Sigmoid colon (tissue), 7 donors: ENCODE measurements at regions of chr6 and their contacts with region 1.

Region 1: GRCh38 chr6:106325336-106326178 is at the start of gene ATG5:
- DNase-seq: peak; percentile 99
- H3K4me3 ChIP-seq: peak within 1 kb of the TSS; percentile 64 to 88 (median 80)
- H3K27ac ChIP-seq: peak within 1 kb of the TSS; percentile 83 to 92 (median 87)
- H3K4me1 ChIP-seq: peaks cover 0 to 18% (median 15%) of the 10 kb centered on the region in 4 donors
- H3K27me3 ChIP-seq: peaks cover 0 to 9% (median 0%) of the 10 kb centered on the region in 3 donors
- CTCF ChIP-seq: no peak
- EP300 ChIP-seq: peak in 1 of 4 donors; percentile 53
- POLR2A ChIP-seq: peak; percentile 56 to 68
- total RNA-seq, gene ATG5: 29.2 to 59.2 (median 47.3) TPM

Region 2: DNA sequence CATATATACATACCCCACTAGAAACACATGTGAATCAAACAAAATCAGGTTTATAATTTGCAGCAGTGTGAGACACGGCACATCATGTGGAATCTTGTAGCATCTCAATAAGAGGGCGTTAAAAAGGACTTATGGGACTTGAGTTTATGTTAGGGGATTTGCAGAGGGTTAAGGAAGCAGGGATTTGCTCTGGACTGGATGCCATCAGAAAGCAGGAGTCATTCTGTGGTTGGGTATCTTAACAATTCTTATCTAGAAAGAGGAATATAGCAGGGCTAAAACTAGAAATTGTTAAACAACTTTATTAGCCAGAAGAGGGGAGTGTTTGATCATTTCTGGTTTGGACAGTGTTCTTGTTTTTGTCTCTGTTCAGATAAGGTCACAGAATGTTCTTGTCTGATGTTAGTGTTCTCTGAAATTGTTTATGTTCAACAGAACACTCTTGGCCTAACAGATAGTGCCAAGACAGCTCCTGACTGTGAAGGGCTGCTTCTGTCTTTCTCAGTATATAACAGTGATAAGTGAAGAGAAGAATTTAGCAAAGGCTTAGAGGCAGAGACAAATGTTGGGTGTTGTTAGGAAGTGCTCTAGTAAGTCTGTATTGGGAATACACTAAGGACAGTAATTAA is 1329.5 kb before region 1 on chr6:
- intact Hi-C with region 1: loop called (anchors 10 kb)
- DNase-seq: peak; percentile 67
- H3K4me3 ChIP-seq: no peak overlapping the region
- H3K27ac ChIP-seq: peak overlapping the region; percentile 73 to 81 (median 75)
- H3K4me1 ChIP-seq: peaks cover 0 to 44% (median 9%) of the 10 kb centered on the region in 4 donors
- H3K27me3 ChIP-seq: no peaks in the 10 kb centered on the region
- CTCF ChIP-seq: peak; percentile 30 to 58 (median 40)
- EP300 ChIP-seq: peak in 2 of 4 donors; percentile 58 to 86
- POLR2A ChIP-seq: no peak

Region 3: DNA sequence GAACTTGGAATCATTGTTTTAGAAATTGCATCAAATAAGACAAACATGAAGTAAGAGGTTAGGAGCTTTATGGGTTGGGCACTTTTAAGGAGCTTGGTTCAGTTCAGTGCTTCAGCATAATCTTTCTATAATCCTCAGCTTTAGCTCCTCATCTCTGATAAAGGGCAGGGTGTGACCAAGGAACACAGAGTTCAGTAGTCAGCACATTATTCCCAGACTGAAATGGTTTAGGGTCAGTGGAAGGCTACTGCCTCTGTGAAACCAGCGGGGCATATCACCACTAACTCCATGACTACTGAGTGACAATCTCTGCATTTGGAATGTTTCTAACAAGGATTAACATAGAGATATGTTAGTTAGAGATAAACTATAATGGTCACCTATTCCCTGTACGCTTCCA is 71.9 kb after region 1 on chr6:
- intact Hi-C with region 1: no loop called
- DNase-seq: no peak
- H3K4me3 ChIP-seq: no peak overlapping the region
- H3K27ac ChIP-seq: no peak overlapping the region
- H3K4me1 ChIP-seq: peaks cover 0 to 18% (median 0%) of the 10 kb centered on the region in 4 donors
- H3K27me3 ChIP-seq: no peaks in the 10 kb centered on the region
- CTCF ChIP-seq: no peak
- EP300 ChIP-seq: no peak
- POLR2A ChIP-seq: no peak